Heart right ventricle (tissue), 16 donors: ENCODE measurements at regions of chr5 and their contacts with region 1.

Region 1: DNA sequence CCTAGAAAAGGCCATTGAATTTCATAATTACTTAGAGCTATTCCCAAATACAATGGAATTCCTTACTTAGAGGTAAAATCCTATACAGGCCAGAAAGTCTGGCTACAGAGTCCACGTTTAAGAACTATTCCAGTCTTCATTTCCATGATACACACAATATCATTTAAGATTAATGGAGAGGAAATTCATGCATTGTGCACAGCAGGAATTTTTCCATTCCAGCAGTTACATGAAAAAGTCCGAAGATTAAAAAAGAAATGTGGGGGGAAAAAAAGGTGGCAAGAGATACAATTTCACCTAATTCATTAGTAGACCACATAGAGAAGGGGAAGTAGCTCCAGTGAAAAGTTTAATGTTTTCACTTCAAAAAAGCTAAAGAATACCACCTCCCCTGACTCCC is 63.1 kb downstream of the CHD1 start:
- DNase-seq: no peak
- ATAC-seq: no peak
- H3K4me3 ChIP-seq: no peak overlapping the region
- H3K27ac ChIP-seq: no peak overlapping the region
- H3K4me1 ChIP-seq: no peaks in the 10 kb centered on the region
- H3K27me3 ChIP-seq: no peaks in the 10 kb centered on the region
- CTCF ChIP-seq: no peak

Region 2: DNA sequence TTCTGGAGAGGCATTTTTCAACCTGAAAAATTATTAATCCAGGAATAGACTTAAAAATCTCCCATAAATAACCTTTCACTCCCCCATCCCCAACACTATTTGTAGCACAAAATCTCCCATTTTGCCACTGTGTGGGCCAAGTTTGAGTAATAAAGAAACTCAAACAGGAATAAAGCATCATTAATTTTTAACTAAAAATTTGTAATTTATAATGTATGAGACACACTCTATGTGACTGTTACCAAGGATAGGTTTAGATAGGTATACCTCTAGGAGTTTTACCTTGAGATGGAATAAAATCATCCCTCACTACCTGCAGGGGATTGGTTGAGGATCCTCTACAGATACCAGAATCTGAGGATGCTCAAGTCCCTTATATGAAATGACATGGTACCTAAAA is 33.1 kb after region 1 on chr5:
- intact Hi-C with region 1: loop called in 2 of 10 experiments (anchors 5 kb)
- DNase-seq: no peak
- ATAC-seq: no peak
- H3K4me3 ChIP-seq: no peak overlapping the region
- H3K27ac ChIP-seq: no peak overlapping the region
- H3K4me1 ChIP-seq: no peaks in the 10 kb centered on the region
- H3K27me3 ChIP-seq: no peaks in the 10 kb centered on the region
- CTCF ChIP-seq: no peak

Region 3: GRCh38 chr5:99004960-99005359 is 139.3 kb after region 1 on chr5:
- intact Hi-C with region 1: no loop called
- DNase-seq: no peak
- ATAC-seq: no peak
- H3K4me3 ChIP-seq: no peak overlapping the region
- H3K27ac ChIP-seq: no peak overlapping the region
- H3K4me1 ChIP-seq: peaks cover 0 to 13% (median 0%) of the 10 kb centered on the region in 9 donors
- H3K27me3 ChIP-seq: no peaks in the 10 kb centered on the region
- CTCF ChIP-seq: no peak